ENCODE measurements at regions of chr21 and their contacts with region 1.

Region 1: DNA sequence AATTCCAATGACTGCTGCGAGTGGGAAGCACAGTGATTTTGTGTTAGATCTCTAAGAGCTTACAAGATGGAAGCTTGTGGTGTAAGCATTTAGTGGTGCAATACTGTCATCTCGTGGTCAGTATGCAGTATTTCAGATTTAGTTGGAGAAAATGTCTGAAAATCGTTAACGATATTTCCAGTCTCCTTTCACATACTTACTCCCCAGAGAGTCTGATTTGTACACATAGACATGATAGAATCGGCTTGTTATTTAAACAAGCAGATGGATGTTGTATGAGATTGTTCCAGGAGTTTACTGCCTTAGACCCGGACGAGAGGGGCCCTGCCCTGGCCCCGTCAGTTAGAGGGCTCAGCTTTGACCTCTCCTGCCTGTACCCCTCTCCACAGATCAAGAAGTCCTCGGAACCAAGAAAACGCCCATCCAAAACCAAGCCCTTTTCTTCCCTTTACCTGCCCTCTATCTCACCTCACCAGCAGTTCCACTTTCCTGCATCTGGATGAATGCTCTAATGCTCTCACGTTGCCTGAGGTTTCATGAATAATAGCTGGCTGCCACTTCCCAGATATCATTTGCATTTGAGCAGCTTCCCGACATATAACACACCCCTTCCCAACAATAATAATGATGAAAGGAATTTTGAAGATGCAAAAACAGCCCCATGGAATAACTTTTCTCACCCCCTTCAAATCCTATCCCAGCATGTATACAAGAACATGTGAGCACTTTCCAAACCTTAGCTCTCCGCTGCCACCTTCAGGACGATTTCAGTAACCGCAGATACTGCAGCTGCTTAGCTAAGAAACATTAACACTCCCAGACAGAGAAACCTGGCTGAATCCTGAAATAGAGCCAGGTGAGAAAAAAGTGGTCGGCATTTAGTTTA is 247.3 kb downstream of the LTN1 start:
- DNase-seq: peak; percentile 70
- H3K4me3 Mint-ChIP-seq: no peak overlapping the region
- H3K27ac Mint-ChIP-seq: no peak overlapping the region
- H3K4me1 Mint-ChIP-seq: no peaks in the 10 kb centered on the region
- H3K27me3 Mint-ChIP-seq: no peaks in the 10 kb centered on the region

Region 2: GRCh38 chr21:28516991-28517592 is 228.3 kb before region 1 on chr21:
- CTCF ChIA-PET with region 1: interaction called, 115 read pairs
- POLR2A ChIA-PET with region 1: no interaction called
- DNase-seq: peak; percentile 66
- H3K4me3 Mint-ChIP-seq: no peak overlapping the region
- H3K27ac Mint-ChIP-seq: no peak overlapping the region
- H3K4me1 Mint-ChIP-seq: peaks cover 2% of the 10 kb centered on the region
- H3K27me3 Mint-ChIP-seq: no peaks in the 10 kb centered on the region

Region 3: GRCh38 chr21:28522014-28522799 is 223.2 kb before region 1 on chr21:
- CTCF ChIA-PET with region 1: interaction called, 115 read pairs
- POLR2A ChIA-PET with region 1: interaction called, 3 read pairs
- DNase-seq: no peak
- H3K4me3 Mint-ChIP-seq: no peak overlapping the region
- H3K27ac Mint-ChIP-seq: no peak overlapping the region
- H3K4me1 Mint-ChIP-seq: peaks cover 2% of the 10 kb centered on the region
- H3K27me3 Mint-ChIP-seq: no peaks in the 10 kb centered on the region

Region 4: GRCh38 chr21:28725396-28725795 is 20.0 kb before region 1 on chr21:
- CTCF ChIA-PET with region 1: interaction called, 15 read pairs
- POLR2A ChIA-PET with region 1: no interaction called
- DNase-seq: no peak
- H3K4me3 Mint-ChIP-seq: no peak overlapping the region
- H3K27ac Mint-ChIP-seq: no peak overlapping the region
- H3K4me1 Mint-ChIP-seq: no peaks in the 10 kb centered on the region
- H3K27me3 Mint-ChIP-seq: no peaks in the 10 kb centered on the region

Region 5: DNA sequence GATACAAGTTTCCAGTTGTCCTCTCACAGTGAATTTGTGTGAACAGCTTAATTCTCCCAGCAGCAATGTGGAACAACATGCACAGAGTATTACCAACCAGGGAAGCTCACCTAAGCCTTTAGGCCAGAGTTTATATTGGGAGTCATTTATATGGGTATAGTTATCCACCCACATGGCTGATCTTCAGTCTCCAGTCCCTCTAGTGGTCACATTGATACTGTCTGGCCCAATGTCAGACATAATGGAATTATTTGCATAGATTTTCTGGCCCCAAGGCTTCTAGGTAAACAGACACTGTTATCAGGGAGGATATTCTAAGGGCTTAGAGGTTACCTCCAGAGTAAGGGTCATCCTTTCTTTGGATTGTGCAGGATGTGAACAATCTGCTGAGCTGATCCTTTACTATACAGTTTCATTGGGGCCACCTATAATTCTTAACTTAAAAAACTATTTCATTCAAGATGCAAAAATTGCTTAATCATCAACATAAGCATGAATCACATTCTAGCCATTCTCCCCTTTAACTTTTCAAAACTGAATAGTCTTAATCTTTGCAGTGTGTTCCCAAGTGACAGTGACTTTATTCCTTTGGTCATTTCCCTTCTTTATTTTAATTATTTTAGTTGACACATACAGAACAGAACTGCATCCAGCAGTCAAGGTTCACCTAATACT is 36.4 kb after region 1 on chr21:
- CTCF ChIA-PET with region 1: interaction called, 11 read pairs
- POLR2A ChIA-PET with region 1: no interaction called
- DNase-seq: no peak
- H3K4me3 Mint-ChIP-seq: no peak overlapping the region
- H3K27ac Mint-ChIP-seq: no peak overlapping the region
- H3K4me1 Mint-ChIP-seq: peaks cover 1% of the 10 kb centered on the region
- H3K27me3 Mint-ChIP-seq: no peaks in the 10 kb centered on the region

Region 6: DNA sequence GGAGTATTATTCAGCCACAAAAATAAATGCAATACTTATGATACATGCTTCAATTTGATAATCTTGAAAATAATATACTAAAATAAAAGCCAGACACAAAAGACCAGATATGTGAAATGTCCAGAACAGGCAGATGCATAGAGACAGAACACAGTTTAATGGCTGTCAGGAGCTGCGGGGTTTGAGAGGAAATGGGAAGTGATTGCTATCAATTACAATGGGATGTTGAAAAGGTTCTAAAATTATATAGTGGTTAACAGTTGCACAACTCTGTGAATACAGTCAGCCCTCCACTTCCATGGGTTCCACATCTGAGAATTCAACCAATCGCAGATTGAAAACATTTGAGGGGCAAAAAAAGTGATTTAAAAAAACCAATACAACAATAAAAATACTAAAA is 193.4 kb after region 1 on chr21:
- CTCF ChIA-PET with region 1: interaction called, 28 read pairs
- POLR2A ChIA-PET with region 1: no interaction called
- DNase-seq: no peak
- H3K4me3 Mint-ChIP-seq: no peak overlapping the region
- H3K27ac Mint-ChIP-seq: no peak overlapping the region
- H3K4me1 Mint-ChIP-seq: peaks cover 8% of the 10 kb centered on the region
- H3K27me3 Mint-ChIP-seq: no peaks in the 10 kb centered on the region

Measured in activated CD4-positive, alpha-beta memory T cell treated with anti-CD3 and anti-CD28 coated beads, Interleukin-2, amount 10 ng/mL, durations not matched to agents 7 days and 5 days (primary cell).